ENCODE measurements at regions of chr17 and their contacts with region 1.

Region 1: GRCh38 chr17:29589524-29590410 is at the start of gene GIT1:
- DNase-seq: peak; percentile 97
- H3K4me3 ChIP-seq: peak within 1 kb of the TSS; percentile 65 to 95 (median 80)
- H3K27ac ChIP-seq: peak within 1 kb of the TSS; percentile 72 to 89 (median 84)
- H3K4me1 ChIP-seq: peaks cover 62 to 90% (median 83%) of the 10 kb centered on the region in 6 donors
- H3K27me3 ChIP-seq: peaks cover 0 to 32% (median 5%) of the 10 kb centered on the region in 7 donors
- CTCF ChIP-seq: peak in 4 of 11 experiments; percentile 31 to 51 (median 34)
- POLR2A ChIP-seq: peak in 2 of 3 donors; percentile 13 to 64
- total RNA-seq, gene GIT1: 42.6 to 64.7 (median 50.2) TPM

Region 2: GRCh38 chr17:29241015-29241963 is 348.5 kb before region 1 on chr17:
- intact Hi-C with region 1: no loop called
- DNase-seq: no peak
- H3K4me3 ChIP-seq: no peak overlapping the region
- H3K27ac ChIP-seq: peak overlapping the region in 4 of 8 donors; percentile 33 to 60 (median 50)
- H3K4me1 ChIP-seq: peaks cover 0 to 20% (median 8%) of the 10 kb centered on the region in 6 donors
- H3K27me3 ChIP-seq: no peaks in the 10 kb centered on the region
- CTCF ChIP-seq: no peak
- POLR2A ChIP-seq: no peak

Region 3: GRCh38 chr17:29615492-29616299 is 25.9 kb after region 1 on chr17:
- intact Hi-C with region 1: loop called (anchors 2 kb)
- DNase-seq: peak; percentile 97
- H3K4me3 ChIP-seq: peak overlapping the region; percentile 31 to 71 (median 42)
- H3K27ac ChIP-seq: peak overlapping the region in 5 of 8 donors; percentile 47 to 82 (median 61)
- H3K4me1 ChIP-seq: peaks cover 43 to 69% (median 62%) of the 10 kb centered on the region in 6 donors
- H3K27me3 ChIP-seq: peaks cover 0 to 67% (median 10%) of the 10 kb centered on the region in 7 donors
- CTCF ChIP-seq: peak in 1 of 11 experiments; percentile 31
- POLR2A ChIP-seq: no peak

Measured in spleen (tissue), 13 donors.